Activated CD4-positive, alpha-beta T cell treated with anti-CD3 and anti-CD28 coated beads, Interleukin-2, amount 10 ng/mL, durations not matched to agents 24 days and 14 days (primary cell): ENCODE measurements at regions of chr20 and their contacts with region 1.

Region 1: DNA sequence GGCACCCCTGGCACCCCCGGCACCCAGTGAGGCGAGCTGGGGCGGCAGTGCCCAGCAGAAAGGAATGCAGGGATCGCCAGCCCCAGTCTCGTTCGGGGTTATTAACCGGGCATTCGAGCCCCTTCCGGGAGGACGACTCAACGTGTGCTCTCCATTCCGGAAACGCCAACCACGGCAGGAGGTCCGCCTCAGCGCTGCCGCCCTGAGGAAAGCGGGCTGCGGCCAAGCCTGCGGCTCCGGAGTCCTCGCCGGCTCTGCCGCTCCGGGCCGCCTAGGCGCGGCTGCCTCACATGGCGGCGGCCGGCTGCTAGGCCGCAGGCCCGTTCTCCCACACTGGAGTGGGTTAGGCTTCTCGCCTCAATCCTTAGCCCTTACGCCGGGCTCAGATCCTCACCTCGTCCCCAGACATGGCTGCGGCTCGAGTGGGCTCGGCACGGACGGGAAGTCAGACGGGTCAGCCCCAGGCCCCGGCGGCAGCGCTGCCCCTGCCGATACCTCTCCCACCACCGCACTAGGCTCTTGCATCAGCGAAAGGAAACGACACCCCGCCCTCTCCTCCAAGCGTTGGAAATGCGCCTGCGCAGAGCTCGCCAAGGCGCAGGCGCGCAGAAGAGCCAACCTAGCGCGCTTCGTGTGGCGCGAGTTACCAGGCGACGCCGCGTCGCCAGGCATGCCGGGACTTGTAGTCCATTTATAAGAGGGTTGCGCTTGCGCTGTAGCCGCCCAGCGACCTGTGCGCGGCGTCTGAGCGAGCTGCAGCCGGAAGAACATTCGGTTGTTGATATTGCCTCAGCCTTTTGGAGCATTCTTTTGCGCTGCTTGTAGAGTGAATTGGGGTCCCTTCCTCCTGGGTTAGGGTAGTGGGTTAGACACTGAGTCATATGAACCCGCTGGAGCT is at the start of gene EIF2S2:
- DNase-seq: peak; percentile 99
- H3K4me3 Mint-ChIP-seq: peak within 1 kb of the TSS; percentile 89
- H3K27ac Mint-ChIP-seq: peak within 1 kb of the TSS; percentile 98
- H3K4me1 Mint-ChIP-seq: peaks cover 35% of the 10 kb centered on the region
- H3K27me3 Mint-ChIP-seq: peaks cover 7% of the 10 kb centered on the region
- total RNA-seq, gene EIF2S2: 106 and 107 TPM in 2 replicates

Region 2: GRCh38 chr20:33810885-33811777 is 300.8 kb before region 1 on chr20 and contains the start of gene CHMP4B:
- intact Hi-C with region 1: loop called (anchors 1 kb)
- DNase-seq: peak; percentile 100
- H3K4me3 Mint-ChIP-seq: peak within 1 kb of the TSS; percentile 99
- H3K27ac Mint-ChIP-seq: peak within 1 kb of the TSS; percentile 98
- H3K4me1 Mint-ChIP-seq: peaks cover 34% of the 10 kb centered on the region
- H3K27me3 Mint-ChIP-seq: peaks cover 2% of the 10 kb centered on the region
- total RNA-seq, gene CHMP4B: 95.6 and 102 TPM in 2 replicates

Region 3: GRCh38 chr20:33992923-33993575 is 118.9 kb before region 1 on chr20:
- intact Hi-C with region 1: loop called (anchors 1 kb)
- DNase-seq: peak; percentile 100
- H3K4me3 Mint-ChIP-seq: peak overlapping the region; percentile 83
- H3K27ac Mint-ChIP-seq: peak overlapping the region; percentile 96
- H3K4me1 Mint-ChIP-seq: peaks cover 48% of the 10 kb centered on the region
- H3K27me3 Mint-ChIP-seq: no peaks in the 10 kb centered on the region

Region 4: GRCh38 chr20:34558320-34559218 is 446.6 kb after region 1 on chr20 and contains the start of gene MAP1LC3A:
- intact Hi-C with region 1: loop called (anchors 2 kb)
- DNase-seq: peak; percentile 98
- H3K4me3 Mint-ChIP-seq: peak within 1 kb of the TSS; percentile 89
- H3K27ac Mint-ChIP-seq: peak within 1 kb of the TSS; percentile 90
- H3K4me1 Mint-ChIP-seq: peaks cover 7% of the 10 kb centered on the region
- H3K27me3 Mint-ChIP-seq: no peaks in the 10 kb centered on the region
- total RNA-seq, gene MAP1LC3A: 3.1 and 3.6 TPM in 2 replicates

Region 5: GRCh38 chr20:34676642-34677373 is 564.9 kb after region 1 on chr20 and contains the start of gene PIGU:
- intact Hi-C with region 1: loop called (anchors 5 kb)
- DNase-seq: peak; percentile 99
- H3K4me3 Mint-ChIP-seq: peak within 1 kb of the TSS; percentile 92
- H3K27ac Mint-ChIP-seq: peak within 1 kb of the TSS; percentile 98
- H3K4me1 Mint-ChIP-seq: peaks cover 25% of the 10 kb centered on the region
- H3K27me3 Mint-ChIP-seq: no peaks in the 10 kb centered on the region
- total RNA-seq, gene PIGU: 26.4 and 27.1 TPM in 2 replicates